ENCODE measurements at regions of chr3 and their contacts with region 1.

Region 1: GRCh38 chr3:60391292-60391691 is 860.0 kb downstream of the FHIT start:
- DNase-seq: no peak
- H3K4me3 ChIP-seq: no peak overlapping the region
- H3K27ac ChIP-seq: no peak overlapping the region
- H3K4me1 ChIP-seq: no peaks in the 10 kb centered on the region
- H3K27me3 ChIP-seq: no peaks in the 10 kb centered on the region
- CTCF ChIP-seq: no peak

Region 2: DNA sequence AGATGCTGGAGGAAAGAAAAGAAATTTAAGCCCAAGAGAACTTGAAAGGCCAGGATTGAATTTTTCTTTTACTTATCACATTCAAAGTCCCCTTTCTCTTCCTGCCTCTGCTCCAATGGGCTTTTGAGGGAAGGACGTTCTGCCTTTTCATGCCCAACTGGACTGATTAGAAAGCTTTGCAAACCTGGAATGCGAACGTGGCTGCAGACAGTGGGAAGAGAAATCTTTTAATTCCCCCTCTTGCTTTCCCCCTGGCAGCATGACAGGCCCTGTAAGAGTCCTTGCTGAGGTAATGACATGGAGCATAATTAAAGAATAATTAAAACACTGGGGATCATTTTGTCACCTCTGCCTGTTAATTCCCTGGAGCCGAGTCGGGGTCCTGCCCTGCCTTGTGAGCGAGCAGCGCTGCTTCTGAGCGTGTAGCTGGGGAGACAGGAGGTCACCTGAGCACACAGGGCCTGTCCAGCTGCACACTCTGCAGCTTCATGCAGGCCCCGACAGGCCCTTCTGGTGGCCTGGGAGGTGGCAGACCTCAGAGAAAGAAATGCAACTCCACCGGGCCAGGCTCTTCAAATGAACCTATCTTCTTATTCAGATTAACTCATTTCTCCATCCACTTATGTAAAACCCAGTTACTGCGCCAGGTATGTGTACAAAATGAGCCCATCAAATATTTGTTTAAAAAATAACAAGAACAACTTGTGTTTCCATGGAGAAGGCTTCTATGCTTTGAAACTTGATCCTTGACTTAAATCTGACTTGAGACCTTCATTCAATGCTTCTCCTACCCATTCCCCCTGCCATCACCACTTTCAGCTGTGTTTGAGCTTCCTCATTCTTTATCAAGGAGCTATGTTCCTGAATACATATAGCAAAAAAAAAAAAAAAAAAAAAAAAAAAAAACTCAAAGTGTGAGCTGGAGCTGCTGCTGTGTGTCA is 713.3 kb before region 1 on chr3:
- CTCF ChIA-PET with region 1: no interaction called
- dilution Hi-C with region 1: no loop called
- in situ Hi-C with region 1: no loop called
- intact Hi-C with region 1: no loop called
- DNase-seq: peak; percentile 30
- H3K4me3 ChIP-seq: no peak overlapping the region
- H3K27ac ChIP-seq: no peak overlapping the region
- H3K4me1 ChIP-seq: peaks cover 8% of the 10 kb centered on the region
- H3K27me3 ChIP-seq: no peaks in the 10 kb centered on the region
- CTCF ChIP-seq: no peak

Region 3: GRCh38 chr3:60160111-60160821 is 231.0 kb before region 1 on chr3:
- CTCF ChIA-PET with region 1: no interaction called
- dilution Hi-C with region 1: no loop called
- in situ Hi-C with region 1: no loop called
- intact Hi-C with region 1: no loop called
- DNase-seq: no peak
- H3K4me3 ChIP-seq: no peak overlapping the region
- H3K27ac ChIP-seq: no peak overlapping the region
- H3K4me1 ChIP-seq: no peaks in the 10 kb centered on the region
- H3K27me3 ChIP-seq: no peaks in the 10 kb centered on the region
- CTCF ChIP-seq: no peak

Region 4: GRCh38 chr3:60475096-60475495 is 83.8 kb after region 1 on chr3:
- CTCF ChIA-PET with region 1: no interaction called
- dilution Hi-C with region 1: loop called (anchors 5 kb)
- in situ Hi-C with region 1: no loop called
- intact Hi-C with region 1: no loop called
- DNase-seq: no peak
- H3K4me3 ChIP-seq: no peak overlapping the region
- H3K27ac ChIP-seq: no peak overlapping the region
- H3K4me1 ChIP-seq: no peaks in the 10 kb centered on the region
- H3K27me3 ChIP-seq: no peaks in the 10 kb centered on the region
- CTCF ChIP-seq: no peak

Measured in mammary epithelial cell (primary cell).